Activated naive CD4-positive, alpha-beta T cell treated with anti-CD3 and anti-CD28 coated beads for 36 hours (primary cell): ENCODE measurements at regions of chr11 and their contacts with region 1.

Region 1: GRCh38 chr11:122655527-122656072 is at the start of gene UBASH3B:
- DNase-seq: peak; percentile 64
- H3K4me3 Mint-ChIP-seq: peak within 1 kb of the TSS; percentile 93
- H3K27ac Mint-ChIP-seq: peak within 1 kb of the TSS; percentile 87
- H3K4me1 Mint-ChIP-seq: peaks cover 37% of the 10 kb centered on the region
- H3K27me3 Mint-ChIP-seq: no peaks in the 10 kb centered on the region
- total RNA-seq, gene UBASH3B: 17.9 to 21.1 TPM

Region 2: GRCh38 chr11:122628810-122629555 is 26.6 kb before region 1 on chr11:
- CTCF ChIA-PET with region 1: interaction called, 10 read pairs
- intact Hi-C with region 1: loop called (anchors 1 kb)
- DNase-seq: peak; percentile 79
- H3K4me3 Mint-ChIP-seq: no peak overlapping the region
- H3K27ac Mint-ChIP-seq: no peak overlapping the region
- H3K4me1 Mint-ChIP-seq: peaks cover 13% of the 10 kb centered on the region
- H3K27me3 Mint-ChIP-seq: no peaks in the 10 kb centered on the region

Region 3: GRCh38 chr11:122690801-122691548 is 35.4 kb after region 1 on chr11:
- CTCF ChIA-PET with region 1: interaction called, 3 read pairs
- intact Hi-C with region 1: loop called (anchors 1 kb)
- DNase-seq: peak; percentile 32
- H3K4me3 Mint-ChIP-seq: peak overlapping the region; percentile 47
- H3K27ac Mint-ChIP-seq: peak overlapping the region; percentile 82
- H3K4me1 Mint-ChIP-seq: peaks cover 72% of the 10 kb centered on the region
- H3K27me3 Mint-ChIP-seq: no peaks in the 10 kb centered on the region

Region 4: GRCh38 chr11:122743949-122744348 is 88.3 kb after region 1 on chr11:
- CTCF ChIA-PET with region 1: interaction called, 12 read pairs
- intact Hi-C with region 1: loop called (anchors 1 kb)
- DNase-seq: peak; percentile 91
- H3K4me3 Mint-ChIP-seq: no peak overlapping the region
- H3K27ac Mint-ChIP-seq: no peak overlapping the region
- H3K4me1 Mint-ChIP-seq: peaks cover 5% of the 10 kb centered on the region
- H3K27me3 Mint-ChIP-seq: peaks cover 6% of the 10 kb centered on the region

Region 5: GRCh38 chr11:122781378-122782195 is 126.0 kb after region 1 on chr11:
- CTCF ChIA-PET with region 1: interaction called, 37 read pairs
- intact Hi-C with region 1: loop called (anchors 1 kb)
- DNase-seq: peak; percentile 87
- H3K4me3 Mint-ChIP-seq: no peak overlapping the region
- H3K27ac Mint-ChIP-seq: no peak overlapping the region
- H3K4me1 Mint-ChIP-seq: peaks cover 22% of the 10 kb centered on the region
- H3K27me3 Mint-ChIP-seq: no peaks in the 10 kb centered on the region